ENCODE measurements at regions of chr6 and their contacts with region 1.

Region 1: GRCh38 chr6:25788305-25788922 is 33.9 kb downstream of the SLC17A4 start:
- DNase-seq: peak; percentile 49 to 64 (median 53)
- H3K4me3 ChIP-seq: no peak overlapping the region
- H3K27ac ChIP-seq: no peak overlapping the region
- H3K4me1 ChIP-seq: no peaks in the 10 kb centered on the region
- H3K27me3 ChIP-seq: no peaks in the 10 kb centered on the region

Region 2: DNA sequence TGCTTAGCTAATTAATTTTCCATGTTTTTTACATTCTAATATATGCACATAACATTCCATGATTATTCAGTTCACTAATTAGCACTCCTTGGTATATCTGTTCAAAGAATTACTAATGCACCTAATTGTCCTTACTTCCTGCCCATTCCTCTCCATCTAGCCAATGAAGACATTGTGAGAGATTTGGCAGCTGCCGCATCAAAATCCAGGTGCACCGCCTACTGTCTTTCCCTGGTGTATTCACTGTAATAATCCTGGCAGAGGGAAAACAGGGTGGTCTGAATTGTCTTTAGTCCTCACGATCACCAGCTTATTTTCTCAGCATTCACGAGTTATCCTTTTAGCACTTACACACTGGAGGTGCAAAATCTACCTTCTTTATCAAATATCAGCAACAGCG is 197.4 kb before region 1 on chr6:
- CTCF ChIA-PET with region 1: no interaction called
- POLR2A ChIA-PET with region 1: no interaction called
- DNase-seq: no peak
- H3K4me3 ChIP-seq: no peak overlapping the region
- H3K27ac ChIP-seq: no peak overlapping the region
- H3K4me1 ChIP-seq: no peaks in the 10 kb centered on the region
- H3K27me3 ChIP-seq: no peaks in the 10 kb centered on the region

Region 3: DNA sequence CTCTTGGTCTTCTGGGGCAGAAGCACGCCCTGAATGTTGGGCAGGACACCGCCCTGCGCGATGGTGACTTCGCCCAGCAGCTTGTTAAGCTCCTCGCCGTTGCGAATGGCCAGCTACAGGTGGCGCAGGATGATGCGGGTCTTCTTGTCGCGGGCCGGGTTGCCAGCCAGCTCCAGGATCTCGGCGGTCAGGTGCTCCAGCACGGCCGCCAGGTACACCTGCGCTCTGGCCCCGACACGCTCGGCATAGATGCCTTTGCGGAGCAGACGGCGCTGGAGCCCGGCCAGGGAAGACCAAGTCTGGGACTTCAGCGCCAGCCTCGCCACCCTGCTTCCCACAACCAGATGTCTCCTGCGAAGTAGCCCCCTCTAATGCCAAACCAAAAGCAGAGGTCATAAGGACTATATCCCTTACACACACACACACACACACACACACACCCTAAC is 93.7 kb after region 1 on chr6:
- CTCF ChIA-PET with region 1: interaction called, 20 read pairs
- POLR2A ChIA-PET with region 1: no interaction called
- DNase-seq: peak in 2 of 3 donors; percentile 57 to 74
- H3K4me3 ChIP-seq: peak overlapping the region in 5 of 7 experiments; percentile 43 to 68 (median 62)
- H3K27ac ChIP-seq: no peak overlapping the region
- H3K4me1 ChIP-seq: peaks cover 0 to 2% (median 0%) of the 10 kb centered on the region in 4 experiments
- H3K27me3 ChIP-seq: no peaks in the 10 kb centered on the region

Region 4: GRCh38 chr6:25942561-25943147 is 154.2 kb after region 1 on chr6:
- CTCF ChIA-PET with region 1: interaction called, 16 read pairs
- POLR2A ChIA-PET with region 1: no interaction called
- DNase-seq: peak; percentile 69 to 80 (median 76)
- H3K4me3 ChIP-seq: no peak overlapping the region
- H3K27ac ChIP-seq: no peak overlapping the region
- H3K4me1 ChIP-seq: peaks cover 0 to 7% (median 1%) of the 10 kb centered on the region in 4 experiments
- H3K27me3 ChIP-seq: no peaks in the 10 kb centered on the region

Measured in common myeloid progenitor, CD34-positive (primary cell).